Activated CD8-positive, alpha-beta T cell treated with anti-CD3 and anti-CD28 coated beads for 36 hours (primary cell): ENCODE measurements at regions of chr2 and their contacts with region 1.

Region 1: DNA sequence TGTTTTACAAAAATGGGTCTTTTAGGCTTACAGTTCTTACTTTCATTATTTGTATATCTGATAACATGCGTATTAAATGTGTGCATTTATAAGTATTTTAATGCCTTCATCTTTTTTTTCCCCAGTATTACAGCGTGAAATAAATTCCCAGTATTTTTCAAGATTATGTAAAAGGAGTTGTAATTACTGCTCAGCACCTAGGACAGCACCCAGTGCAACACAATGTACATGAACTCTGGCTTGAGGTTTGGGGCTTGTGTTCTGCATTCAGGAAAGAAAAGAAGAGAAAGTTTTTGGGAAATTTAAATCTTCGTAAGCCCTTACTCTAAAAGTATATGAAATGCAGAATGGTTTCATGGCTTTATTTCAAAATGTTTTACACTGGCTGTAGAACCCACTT is 16.7 kb downstream of the ZNF638 start:
- DNase-seq: peak; percentile 6
- ATAC-seq: no peak
- H3K4me3 Mint-ChIP-seq: no peak overlapping the region
- H3K27ac Mint-ChIP-seq: no peak overlapping the region
- H3K4me1 Mint-ChIP-seq: peaks cover 62% of the 10 kb centered on the region
- H3K27me3 Mint-ChIP-seq: no peaks in the 10 kb centered on the region
- CTCF ChIP-seq: no peak

Region 2: GRCh38 chr2:71291398-71291797 is 56.9 kb before region 1 on chr2:
- CTCF ChIA-PET with region 1: no interaction called
- POLR2A ChIA-PET with region 1: no interaction called
- intact Hi-C with region 1: no loop called
- DNase-seq: no peak
- ATAC-seq: no peak
- H3K4me3 Mint-ChIP-seq: no peak overlapping the region
- H3K27ac Mint-ChIP-seq: no peak overlapping the region
- H3K4me1 Mint-ChIP-seq: no peaks in the 10 kb centered on the region
- H3K27me3 Mint-ChIP-seq: peaks cover 8% of the 10 kb centered on the region
- CTCF ChIP-seq: no peak

Region 3: GRCh38 chr2:71331581-71332434 is 16.5 kb before region 1 on chr2 and contains the start of gene ZNF638:
- CTCF ChIA-PET with region 1: interaction called, 17 read pairs
- POLR2A ChIA-PET with region 1: interaction called, 4 read pairs
- intact Hi-C with region 1: no loop called
- DNase-seq: peak; percentile 94
- ATAC-seq: peak; percentile 99
- H3K4me3 Mint-ChIP-seq: peak within 1 kb of the TSS; percentile 93
- H3K27ac Mint-ChIP-seq: peak within 1 kb of the TSS; percentile 99
- H3K4me1 Mint-ChIP-seq: peaks cover 26% of the 10 kb centered on the region
- H3K27me3 Mint-ChIP-seq: no peaks in the 10 kb centered on the region
- CTCF ChIP-seq: peak; percentile 76
- total RNA-seq, gene ZNF638: 81.1 to 86.0 TPM